B cell (primary cell): ENCODE measurements at regions of chr4 and their contacts with region 1.

Region 1: DNA sequence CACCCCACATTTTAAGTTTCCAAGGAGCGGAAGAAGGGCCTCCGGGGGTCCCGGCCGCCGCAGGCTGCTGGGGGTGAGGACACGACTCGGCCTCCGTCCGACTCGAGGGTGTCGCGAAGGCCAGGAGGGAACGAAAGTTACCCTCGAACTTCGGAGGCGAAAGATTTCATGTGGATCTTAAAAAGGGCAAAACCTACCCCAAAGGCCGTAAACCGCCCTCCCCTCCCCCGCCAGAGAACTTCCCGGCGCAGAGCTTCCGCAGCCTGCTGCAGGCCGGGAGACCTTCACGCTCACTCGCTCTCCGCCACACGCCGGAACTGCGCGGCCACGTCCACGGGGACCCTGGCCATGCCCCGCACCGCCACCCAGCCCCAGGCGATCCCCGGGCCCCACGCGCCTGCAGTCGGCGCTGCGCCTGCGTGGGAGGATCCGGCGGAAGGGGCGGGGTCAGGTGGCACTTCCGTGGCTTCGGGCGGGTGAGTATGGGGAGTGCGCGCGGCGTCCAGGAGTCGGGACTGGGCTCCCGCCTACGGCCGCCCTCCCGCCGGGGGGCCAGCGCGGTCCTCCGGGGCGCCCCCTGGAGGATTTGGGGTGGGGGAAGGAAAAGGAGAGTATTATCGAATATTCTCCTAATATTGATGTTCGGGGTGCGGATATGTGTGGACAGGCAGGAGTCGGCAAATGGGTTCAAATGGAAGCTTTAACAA is at the start of gene MMAA:
- DNase-seq: peak; percentile 95
- ATAC-seq: peak; percentile 93
- H3K4me3 ChIP-seq: peak within 1 kb of the TSS; percentile 66 to 96 (median 83)
- H3K4me3 Mint-ChIP-seq: peak within 1 kb of the TSS; percentile 90
- H3K27ac ChIP-seq: peak within 1 kb of the TSS; percentile 86 to 94
- H3K27ac Mint-ChIP-seq: peak within 1 kb of the TSS; percentile 95
- H3K4me1 ChIP-seq: peaks cover 10 to 17% of the 10 kb centered on the region in 2 donors
- H3K4me1 Mint-ChIP-seq: peaks cover 28% of the 10 kb centered on the region
- H3K27me3 ChIP-seq: no peaks in the 10 kb centered on the region
- H3K27me3 Mint-ChIP-seq: no peaks in the 10 kb centered on the region
- CTCF ChIP-seq: peak; percentile 63
- total RNA-seq, gene MMAA: 7.8 and 9.0 TPM in 2 replicates

Region 2: DNA sequence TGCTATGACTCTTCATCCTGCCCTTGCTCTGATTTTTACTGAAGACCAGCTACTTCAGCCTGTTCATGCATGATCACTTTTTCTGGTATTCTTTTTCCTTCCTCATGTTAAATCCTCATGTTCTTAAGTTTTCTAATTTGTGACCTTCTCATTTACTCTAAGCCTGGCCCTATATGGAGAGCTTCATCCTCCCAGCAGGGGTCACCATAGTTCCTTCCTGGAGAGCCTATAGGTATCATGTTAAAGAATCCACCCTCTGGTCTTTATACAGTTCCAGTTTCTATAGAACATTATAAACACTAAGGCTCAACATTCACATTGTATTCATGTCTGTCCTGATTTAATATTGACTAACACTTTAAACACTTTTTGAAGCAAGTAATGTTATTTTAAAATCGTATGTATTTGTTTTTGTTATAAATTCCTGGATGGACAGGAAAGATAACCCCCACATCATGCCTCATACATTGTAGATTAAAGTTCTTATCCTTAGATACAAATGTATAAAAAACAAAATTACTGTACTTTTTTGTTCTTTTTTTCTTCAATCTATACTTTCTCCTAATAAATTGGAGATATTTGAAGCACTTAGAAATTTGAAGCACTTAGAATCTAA is 384.9 kb before region 1 on chr4:
- CTCF ChIA-PET with region 1: interaction called, 26 read pairs
- POLR2A ChIA-PET with region 1: no interaction called
- intact Hi-C with region 1: loop called (anchors 2 kb)
- DNase-seq: peak; percentile 59
- ATAC-seq: peak; percentile 53
- H3K4me3 ChIP-seq: no peak overlapping the region
- H3K4me3 Mint-ChIP-seq: no peak overlapping the region
- H3K27ac ChIP-seq: no peak overlapping the region
- H3K27ac Mint-ChIP-seq: no peak overlapping the region
- H3K4me1 ChIP-seq: no peaks in the 10 kb centered on the region
- H3K4me1 Mint-ChIP-seq: no peaks in the 10 kb centered on the region
- H3K27me3 ChIP-seq: no peaks in the 10 kb centered on the region
- H3K27me3 Mint-ChIP-seq: peaks cover 8% of the 10 kb centered on the region
- CTCF ChIP-seq: peak; percentile 73

Region 3: GRCh38 chr4:145732895-145733880 is 114.1 kb after region 1 on chr4:
- CTCF ChIA-PET with region 1: no interaction called
- POLR2A ChIA-PET with region 1: no interaction called
- intact Hi-C with region 1: loop called (anchors 1 kb)
- DNase-seq: peak; percentile 86
- ATAC-seq: peak; percentile 99
- H3K4me3 ChIP-seq: peak overlapping the region; percentile 48 to 94 (median 65)
- H3K4me3 Mint-ChIP-seq: peak overlapping the region; percentile 80
- H3K27ac ChIP-seq: peak overlapping the region in 1 of 2 donors; percentile 44
- H3K27ac Mint-ChIP-seq: peak overlapping the region; percentile 34
- H3K4me1 ChIP-seq: peaks cover 5 to 14% of the 10 kb centered on the region in 2 donors
- H3K4me1 Mint-ChIP-seq: peaks cover 20% of the 10 kb centered on the region
- H3K27me3 ChIP-seq: peaks cover 0 to 4% (median 2%) of the 10 kb centered on the region in 4 experiments
- H3K27me3 Mint-ChIP-seq: peaks cover 17% of the 10 kb centered on the region
- CTCF ChIP-seq: no peak

Region 4: DNA sequence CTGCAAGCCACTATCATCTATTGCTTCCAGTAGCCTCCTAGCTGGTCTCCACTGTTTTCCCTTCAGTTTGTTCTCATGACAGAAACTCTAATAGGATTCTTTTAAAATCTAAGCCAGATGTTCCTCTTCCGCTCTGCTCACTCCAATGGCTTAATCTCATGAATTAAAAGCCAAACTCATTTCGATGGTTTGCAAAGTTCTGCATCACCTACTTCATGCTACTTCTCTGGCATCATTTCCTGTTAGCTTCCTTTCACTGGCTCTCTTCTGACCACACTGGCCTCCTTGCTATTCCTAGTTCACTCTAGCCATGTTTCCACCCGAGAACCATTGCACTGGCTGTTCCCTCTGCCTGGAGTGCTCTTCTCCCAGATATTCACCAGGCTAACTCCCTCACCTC is 454.4 kb after region 1 on chr4:
- CTCF ChIA-PET with region 1: no interaction called
- POLR2A ChIA-PET with region 1: no interaction called
- intact Hi-C with region 1: no loop called
- DNase-seq: peak; percentile 32
- ATAC-seq: no peak
- H3K4me3 ChIP-seq: no peak overlapping the region
- H3K4me3 Mint-ChIP-seq: no peak overlapping the region
- H3K27ac ChIP-seq: no peak overlapping the region
- H3K27ac Mint-ChIP-seq: no peak overlapping the region
- H3K4me1 ChIP-seq: peaks cover 10% of the 10 kb centered on the region in 2 donors
- H3K4me1 Mint-ChIP-seq: no peaks in the 10 kb centered on the region
- H3K27me3 ChIP-seq: no peaks in the 10 kb centered on the region
- H3K27me3 Mint-ChIP-seq: no peaks in the 10 kb centered on the region
- CTCF ChIP-seq: no peak

Region 5: DNA sequence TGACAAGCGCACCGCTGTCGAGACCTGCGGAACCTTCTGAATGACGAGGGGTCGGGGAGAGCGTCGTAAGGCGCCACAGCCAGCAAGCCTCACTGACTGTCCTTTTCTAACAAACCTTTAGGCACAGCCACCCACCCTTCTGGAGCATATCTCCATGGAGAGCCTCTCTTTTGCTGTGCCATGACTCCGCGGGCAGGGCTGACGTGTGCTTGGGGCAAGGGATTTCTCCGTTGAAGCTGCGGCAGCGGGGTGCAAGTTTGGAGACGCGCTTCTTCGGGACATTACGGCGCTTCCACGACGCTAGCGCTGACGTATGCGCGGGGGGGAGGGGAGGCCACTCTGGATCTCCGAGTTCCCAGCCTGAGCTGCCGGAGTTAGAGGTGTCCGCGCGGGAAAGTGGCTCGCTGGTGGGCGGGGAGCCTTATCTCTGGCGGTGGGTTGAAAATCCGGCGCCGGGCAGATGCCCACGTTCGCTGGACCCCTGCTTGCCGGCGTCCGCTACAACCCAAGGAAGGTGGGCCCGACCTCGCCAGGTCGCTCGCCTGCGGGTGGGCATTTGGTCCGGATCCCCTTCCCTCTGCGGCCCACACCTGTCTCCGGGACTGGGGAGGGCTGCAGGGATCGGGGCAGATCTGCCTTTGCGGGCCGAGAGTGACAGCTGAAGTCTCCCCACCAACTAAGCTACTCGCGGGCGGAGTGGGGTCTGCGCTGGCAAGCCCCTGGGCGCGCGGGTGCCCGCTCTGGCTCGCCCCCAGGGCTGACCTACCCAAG is 903.2 kb after region 1 on chr4:
- CTCF ChIA-PET with region 1: no interaction called
- POLR2A ChIA-PET with region 1: no interaction called
- intact Hi-C with region 1: loop called (anchors 1 kb)
- DNase-seq: peak; percentile 86
- ATAC-seq: peak; percentile 75
- H3K4me3 ChIP-seq: peak overlapping the region; percentile 61 to 98 (median 96)
- H3K4me3 Mint-ChIP-seq: no peak overlapping the region
- H3K27ac ChIP-seq: peak overlapping the region; percentile 62 to 75
- H3K27ac Mint-ChIP-seq: no peak overlapping the region
- H3K4me1 ChIP-seq: peaks cover 18 to 22% of the 10 kb centered on the region in 2 donors
- H3K4me1 Mint-ChIP-seq: peaks cover 22% of the 10 kb centered on the region
- H3K27me3 ChIP-seq: no peaks in the 10 kb centered on the region
- H3K27me3 Mint-ChIP-seq: no peaks in the 10 kb centered on the region
- CTCF ChIP-seq: no peak